ENCODE measurements at regions of chr6 and their contacts with region 1.

Region 1: DNA sequence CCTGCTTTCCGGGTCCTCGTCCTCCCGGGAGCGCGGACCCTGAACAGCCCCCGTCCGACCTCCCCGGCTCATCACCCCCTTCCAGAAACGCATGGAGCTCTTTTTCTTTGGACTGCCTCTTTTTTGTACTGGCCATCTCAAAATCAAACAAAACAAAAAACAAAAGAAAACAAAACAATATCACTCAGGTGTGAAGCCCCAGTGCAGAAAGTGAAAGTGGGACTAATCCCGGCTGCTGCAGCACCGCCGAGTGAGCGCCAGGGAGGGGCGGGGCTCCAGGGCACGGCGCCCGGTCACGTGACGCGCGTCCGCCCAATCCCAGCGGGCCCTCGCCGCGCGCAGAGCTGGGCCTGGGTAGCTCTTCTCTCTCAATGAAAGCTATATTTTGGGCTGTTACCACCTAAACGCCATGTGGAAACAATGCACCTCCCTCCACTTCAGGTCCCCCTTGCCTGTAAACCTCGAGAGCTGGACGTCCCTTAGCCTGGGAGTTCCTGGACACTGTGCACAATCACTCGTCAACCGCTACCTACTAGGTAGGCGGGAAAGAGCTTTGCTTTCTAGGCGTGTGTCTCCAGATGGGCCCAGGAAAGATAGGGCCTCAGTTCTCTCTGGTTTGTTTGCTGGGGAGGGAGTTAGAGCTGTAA is 93.7 kb upstream of the PRDM1 start:
- DNase-seq: peak; percentile 92
- H3K4me3 Mint-ChIP-seq: peak overlapping the region; percentile 91
- H3K27ac Mint-ChIP-seq: peak overlapping the region; percentile 96
- H3K4me1 Mint-ChIP-seq: peaks cover 55% of the 10 kb centered on the region
- H3K27me3 Mint-ChIP-seq: peaks cover 68% of the 10 kb centered on the region

Region 2: GRCh38 chr6:105981002-105981887 is 11.2 kb before region 1 on chr6:
- CTCF ChIA-PET with region 1: interaction called, 37 read pairs
- POLR2A ChIA-PET with region 1: interaction called, 10 read pairs
- DNase-seq: peak; percentile 42
- H3K4me3 Mint-ChIP-seq: peak overlapping the region; percentile 85
- H3K27ac Mint-ChIP-seq: peak overlapping the region; percentile 91
- H3K4me1 Mint-ChIP-seq: peaks cover 73% of the 10 kb centered on the region
- H3K27me3 Mint-ChIP-seq: peaks cover 10% of the 10 kb centered on the region

Region 3: DNA sequence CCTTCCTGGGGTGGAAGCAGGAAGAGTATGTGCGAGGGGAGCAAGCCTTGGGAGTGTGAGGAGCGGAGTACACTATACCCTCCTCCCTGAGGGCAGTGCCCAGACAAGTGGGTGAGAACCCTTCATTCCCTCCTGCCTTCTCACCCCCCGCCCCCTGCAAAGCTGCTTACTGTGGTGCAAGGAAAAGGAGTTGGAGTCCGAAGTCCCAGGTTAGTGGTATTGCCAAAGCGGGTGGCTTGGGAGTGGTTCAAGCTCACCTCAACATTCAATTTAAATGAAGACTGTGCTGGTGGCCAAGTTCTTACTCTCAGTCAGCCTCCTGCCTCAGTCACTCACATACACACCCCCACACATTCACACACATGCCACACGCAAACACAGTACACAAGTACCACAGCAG is 19.0 kb after region 1 on chr6:
- CTCF ChIA-PET with region 1: interaction called, 13 read pairs
- POLR2A ChIA-PET with region 1: no interaction called
- DNase-seq: no peak
- H3K4me3 Mint-ChIP-seq: no peak overlapping the region
- H3K27ac Mint-ChIP-seq: no peak overlapping the region
- H3K4me1 Mint-ChIP-seq: no peaks in the 10 kb centered on the region
- H3K27me3 Mint-ChIP-seq: peaks cover 23% of the 10 kb centered on the region

Measured in activated CD4-positive, alpha-beta T cell treated with anti-CD3 and anti-CD28 coated beads, Interleukin-2, amount 10 ng/mL, durations not matched to agents 7 days and 5 days (primary cell).